Esophagus muscularis mucosa (tissue), 4 donors: ENCODE measurements at regions of chr12 and their contacts with region 1.

Region 1: DNA sequence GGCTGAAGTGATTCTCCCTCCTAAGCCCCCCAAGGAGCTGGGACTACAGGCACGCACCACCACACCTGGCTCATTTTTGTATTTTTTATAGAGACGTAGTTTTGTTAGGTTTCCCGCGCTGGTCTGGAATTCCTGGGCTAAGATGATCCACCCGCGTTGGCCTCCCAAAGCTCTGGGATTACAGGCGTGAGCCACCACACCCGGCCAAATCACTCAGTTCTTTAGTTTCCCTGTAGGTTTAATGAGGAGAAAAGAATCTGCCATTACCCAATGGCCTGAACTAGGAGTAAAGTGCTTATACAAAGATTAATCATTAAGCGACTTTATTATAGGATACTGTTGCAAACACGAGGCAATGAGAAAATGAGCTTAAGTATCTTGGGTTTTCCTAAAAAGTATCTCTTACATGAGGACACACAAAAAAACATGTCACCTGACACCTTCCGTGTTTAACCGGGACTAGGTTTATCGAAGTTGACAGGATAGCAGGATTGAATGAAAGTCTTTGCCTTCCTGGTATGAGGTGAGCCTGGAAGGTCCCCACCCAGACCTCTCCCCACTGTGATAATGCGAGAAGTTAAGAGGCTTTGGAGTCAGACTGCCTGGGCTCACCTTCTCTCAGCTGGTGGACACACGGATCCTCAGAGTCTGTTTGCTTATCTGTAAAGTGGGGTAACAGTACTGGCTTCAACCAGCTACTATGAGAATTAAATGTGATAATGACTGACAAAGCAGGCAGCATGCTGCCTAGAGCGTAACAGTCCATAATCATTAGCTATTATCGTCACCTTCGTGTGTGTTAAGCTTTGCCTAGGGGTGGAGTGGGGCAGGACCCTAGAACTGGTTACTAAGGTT is 133.5 kb upstream of the KRAS start:
- DNase-seq: no peak
- H3K4me3 ChIP-seq: peak overlapping the region; percentile 70 to 73 (median 72)
- H3K27ac ChIP-seq: peak overlapping the region; percentile 97 to 100 (median 99)
- H3K4me1 ChIP-seq: peaks cover 0 to 13% (median 9%) of the 10 kb centered on the region in 4 donors
- H3K27me3 ChIP-seq: no peaks in the 10 kb centered on the region
- CTCF ChIP-seq: no peak
- EP300 ChIP-seq: no peak
- POLR2A ChIP-seq: no peak

Region 2: GRCh38 chr12:25337916-25338315 is 46.3 kb before region 1 on chr12:
- intact Hi-C with region 1: loop called (anchors 5 kb)
- DNase-seq: no peak
- H3K4me3 ChIP-seq: no peak overlapping the region
- H3K27ac ChIP-seq: no peak overlapping the region
- H3K4me1 ChIP-seq: peaks cover 0 to 15% (median 13%) of the 10 kb centered on the region in 4 donors
- H3K27me3 ChIP-seq: no peaks in the 10 kb centered on the region
- CTCF ChIP-seq: no peak
- EP300 ChIP-seq: no peak
- POLR2A ChIP-seq: no peak